ENCODE measurements at regions of chr12 and their contacts with region 1.

Region 1: DNA sequence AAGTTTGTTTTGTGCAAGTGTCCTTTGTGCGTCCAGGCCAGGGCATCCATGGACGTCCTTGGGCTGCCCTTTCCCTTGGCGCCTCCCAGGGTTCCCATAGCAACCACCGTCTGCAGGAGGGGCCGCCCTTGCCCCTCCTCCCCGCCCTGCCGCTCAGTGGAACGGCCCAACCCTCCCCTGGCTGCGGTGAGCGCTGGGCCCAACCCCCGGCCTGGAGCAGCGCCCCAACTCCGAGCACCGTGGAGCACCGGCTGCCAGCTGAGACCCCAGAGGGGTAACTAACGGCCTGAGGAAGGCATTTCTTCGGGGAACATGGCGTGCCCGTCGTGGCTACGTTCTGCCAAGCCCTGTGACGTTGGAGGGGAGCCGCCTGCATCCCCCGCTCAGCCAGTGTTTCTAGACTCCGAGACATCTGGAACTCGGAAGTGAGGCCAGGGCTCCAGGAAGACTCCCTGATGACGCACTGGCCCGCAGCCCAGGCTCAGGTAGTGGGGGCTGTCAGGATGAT is 5.3 kb upstream of the ACACB start:
- DNase-seq: peak; percentile 94 to 97 (median 96)
- ATAC-seq: peak; percentile 84 to 95 (median 92)
- H3K4me3 ChIP-seq: peak overlapping the region; percentile 34 to 79 (median 64)
- H3K27ac ChIP-seq: peak overlapping the region; percentile 88 to 99 (median 94)
- H3K4me1 ChIP-seq: peaks cover 7 to 54% (median 41%) of the 10 kb centered on the region in 12 donors
- H3K27me3 ChIP-seq: no peaks in the 10 kb centered on the region
- CTCF ChIP-seq: no peak
- POLR2A ChIP-seq: peak in 1 of 2 donors; percentile 83

Region 2: GRCh38 chr12:109134186-109134917 is 23.3 kb after region 1 on chr12:
- intact Hi-C with region 1: loop called in 2 of 10 experiments (anchors 1 to 2 kb)
- DNase-seq: peak in 2 of 5 donors; percentile 70 to 73
- ATAC-seq: peak in 3 of 4 donors; percentile 10 to 27 (median 16)
- H3K4me3 ChIP-seq: no peak overlapping the region
- H3K27ac ChIP-seq: peak overlapping the region; percentile 3 to 89 (median 46)
- H3K4me1 ChIP-seq: peaks cover 0 to 87% (median 35%) of the 10 kb centered on the region in 12 donors
- H3K27me3 ChIP-seq: no peaks in the 10 kb centered on the region
- CTCF ChIP-seq: peak; percentile 42 to 68 (median 55)
- POLR2A ChIP-seq: no peak

Region 3: DNA sequence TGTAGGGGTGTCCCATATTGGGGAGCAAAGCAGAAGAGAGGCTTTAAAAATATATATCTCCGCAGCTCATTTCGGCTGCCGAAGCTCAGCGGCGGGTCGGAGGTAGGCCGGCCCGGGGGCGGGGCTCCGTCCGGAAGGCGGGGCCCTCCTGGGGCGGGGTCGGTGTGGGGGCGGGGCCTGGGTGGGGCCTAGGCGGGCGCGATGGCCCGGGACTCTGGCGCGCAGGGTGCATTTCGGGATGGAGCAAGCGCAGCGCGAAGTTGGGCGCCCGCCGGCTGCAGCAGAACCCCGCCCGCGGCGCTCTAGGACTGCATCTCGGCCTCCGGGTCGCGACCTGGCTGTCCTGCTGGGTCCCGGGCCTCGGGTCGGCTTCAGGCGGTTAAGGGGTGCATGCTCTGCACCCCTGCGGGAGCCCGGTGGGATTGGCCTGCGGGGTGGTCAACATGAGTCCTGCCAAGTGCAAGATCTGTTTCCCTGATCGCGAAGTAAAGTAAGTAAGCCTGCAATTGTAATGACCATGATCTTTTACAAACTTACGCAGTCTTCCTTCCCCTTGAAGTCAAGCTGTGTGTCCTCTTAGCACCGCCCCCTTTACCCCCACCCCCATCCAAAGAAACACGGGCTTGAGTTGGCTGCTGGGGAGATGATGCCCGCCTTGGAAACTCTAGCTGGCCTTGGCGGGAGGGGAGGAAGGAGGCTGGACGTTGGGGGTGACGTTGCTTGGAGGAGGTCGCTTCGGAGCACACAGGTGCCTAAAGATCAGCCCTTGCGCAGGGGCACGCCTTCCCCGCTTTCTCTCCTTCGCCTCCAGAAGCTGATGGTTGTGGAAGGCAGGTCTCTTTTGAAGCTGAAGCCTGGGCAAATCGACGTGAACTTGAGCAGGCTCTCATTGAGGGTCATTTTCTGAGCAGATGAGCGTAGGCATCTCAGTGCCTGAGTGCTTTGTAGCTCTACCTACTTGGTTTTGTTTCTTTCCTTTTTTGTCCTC is 43.7 kb after region 1 on chr12:
- intact Hi-C with region 1: loop called in 8 of 10 experiments (anchors 2 to 5 kb)
- DNase-seq: peak; percentile 86 to 92 (median 90)
- ATAC-seq: peak; percentile 89 to 97 (median 94)
- H3K4me3 ChIP-seq: peak overlapping the region; percentile 28 to 82 (median 68)
- H3K27ac ChIP-seq: peak overlapping the region; percentile 67 to 93 (median 80)
- H3K4me1 ChIP-seq: peaks cover 5 to 66% (median 46%) of the 10 kb centered on the region in 12 donors
- H3K27me3 ChIP-seq: no peaks in the 10 kb centered on the region
- CTCF ChIP-seq: peak in 1 of 12 donors; percentile 14
- POLR2A ChIP-seq: peak in 1 of 2 donors; percentile 52

Region 4: GRCh38 chr12:109160433-109160832 is 49.4 kb after region 1 on chr12:
- intact Hi-C with region 1: loop called in 9 of 10 experiments (anchors 1 to 10 kb)
- DNase-seq: peak in 4 of 5 donors; percentile 33 to 57 (median 46)
- ATAC-seq: peak; percentile 59 to 79 (median 72)
- H3K4me3 ChIP-seq: peak overlapping the region in 4 of 12 donors; percentile 1 to 16 (median 10)
- H3K27ac ChIP-seq: peak overlapping the region; percentile 60 to 96 (median 84)
- H3K4me1 ChIP-seq: peaks cover 12 to 92% (median 64%) of the 10 kb centered on the region in 12 donors
- H3K27me3 ChIP-seq: no peaks in the 10 kb centered on the region
- CTCF ChIP-seq: no peak
- POLR2A ChIP-seq: no peak

Region 5: DNA sequence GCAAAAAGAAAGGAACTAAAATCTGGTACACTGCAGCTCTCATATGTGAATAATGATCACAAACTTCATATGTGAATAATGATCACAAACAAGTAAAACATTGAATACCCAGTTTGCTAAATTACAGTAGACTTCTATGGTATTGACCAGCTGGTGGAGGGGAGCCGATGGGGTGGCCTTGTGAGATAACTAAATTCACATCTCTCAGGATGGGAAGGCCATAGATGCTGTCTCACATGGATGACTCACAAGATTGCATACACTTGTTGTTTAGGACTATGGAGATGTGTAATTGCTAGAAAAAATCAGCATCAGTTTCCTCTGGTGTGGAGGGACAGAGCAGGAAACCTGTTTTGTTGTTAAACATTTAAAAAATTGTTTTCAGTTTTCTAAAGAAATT is 54.6 kb after region 1 on chr12:
- intact Hi-C with region 1: loop called in 3 of 10 experiments (anchors 1 to 10 kb)
- DNase-seq: no peak
- ATAC-seq: no peak
- H3K4me3 ChIP-seq: no peak overlapping the region
- H3K27ac ChIP-seq: peak overlapping the region in 1 of 12 donors; percentile 80
- H3K4me1 ChIP-seq: peaks cover 4 to 42% (median 26%) of the 10 kb centered on the region in 12 donors
- H3K27me3 ChIP-seq: no peaks in the 10 kb centered on the region
- CTCF ChIP-seq: no peak
- POLR2A ChIP-seq: no peak

Region 6: GRCh38 chr12:109385339-109386067 is 274.5 kb after region 1 on chr12:
- intact Hi-C with region 1: loop called in 4 of 10 experiments (anchors 10 kb)
- DNase-seq: peak in 1 of 5 donors; percentile 27
- ATAC-seq: peak in 3 of 4 donors; percentile 44 to 80 (median 69)
- H3K4me3 ChIP-seq: peak overlapping the region in 2 of 12 donors; percentile 17 to 31
- H3K27ac ChIP-seq: peak overlapping the region in 1 of 12 donors; percentile 27
- H3K4me1 ChIP-seq: peaks cover 0 to 6% (median 0%) of the 10 kb centered on the region in 12 donors
- H3K27me3 ChIP-seq: peaks cover 0 to 11% (median 0%) of the 10 kb centered on the region in 9 donors
- CTCF ChIP-seq: peak; percentile 25 to 69 (median 50)
- POLR2A ChIP-seq: no peak